Mammary epithelial cell (primary cell): ENCODE measurements at regions of chr9 and their contacts with region 1.

Region 1: GRCh38 chr9:135241381-135242048 is 154.0 kb downstream of the OLFM1 start:
- DNase-seq: no peak
- H3K4me3 ChIP-seq: no peak overlapping the region
- H3K27ac ChIP-seq: no peak overlapping the region
- H3K4me1 ChIP-seq: no peaks in the 10 kb centered on the region
- H3K27me3 ChIP-seq: no peaks in the 10 kb centered on the region
- CTCF ChIP-seq: no peak

Region 2: GRCh38 chr9:135308821-135309762 is 67.6 kb after region 1 on chr9:
- CTCF ChIA-PET with region 1: no interaction called
- dilution Hi-C with region 1: loop called (anchors 5 kb)
- in situ Hi-C with region 1: no loop called
- intact Hi-C with region 1: no loop called
- DNase-seq: no peak
- H3K4me3 ChIP-seq: no peak overlapping the region
- H3K27ac ChIP-seq: no peak overlapping the region
- H3K4me1 ChIP-seq: no peaks in the 10 kb centered on the region
- H3K27me3 ChIP-seq: no peaks in the 10 kb centered on the region
- CTCF ChIP-seq: no peak

Region 3: DNA sequence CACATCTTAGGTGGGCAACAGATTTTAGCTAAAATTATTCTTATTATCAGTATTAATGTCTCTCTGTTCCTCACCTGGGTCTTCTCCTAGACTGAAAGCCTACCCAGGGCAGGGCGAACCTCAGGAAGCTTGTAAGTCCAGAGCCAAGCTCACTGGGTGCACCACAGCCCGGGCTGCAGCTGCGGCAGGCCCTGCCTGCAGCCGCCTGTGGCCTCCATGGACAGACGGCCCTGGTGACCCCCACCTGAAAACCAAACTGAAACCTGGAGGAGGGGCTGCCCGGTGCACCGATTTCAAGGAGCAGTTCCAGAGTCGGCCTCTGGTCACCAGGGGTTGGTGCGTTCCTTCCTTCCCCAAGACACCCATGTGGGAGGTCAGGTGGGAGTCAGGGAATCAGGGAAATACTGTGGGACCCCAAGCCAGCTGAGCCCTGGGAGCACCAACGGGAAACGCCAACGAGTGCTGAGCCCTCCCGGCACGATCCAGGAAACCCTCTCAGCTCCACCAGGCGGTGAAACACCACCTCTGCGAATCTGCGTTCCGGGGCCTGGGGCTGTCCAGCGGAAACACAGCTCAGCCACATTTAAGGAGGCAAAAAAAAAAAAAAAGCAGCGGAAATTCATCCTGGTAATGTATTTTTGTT is 169.4 kb after region 1 on chr9:
- CTCF ChIA-PET with region 1: no interaction called
- dilution Hi-C with region 1: no loop called
- in situ Hi-C with region 1: no loop called
- intact Hi-C with region 1: no loop called
- DNase-seq: no peak
- H3K4me3 ChIP-seq: no peak overlapping the region
- H3K27ac ChIP-seq: no peak overlapping the region
- H3K4me1 ChIP-seq: no peaks in the 10 kb centered on the region
- H3K27me3 ChIP-seq: no peaks in the 10 kb centered on the region
- CTCF ChIP-seq: no peak